ENCODE measurements at regions of chr17 and their contacts with region 1.

Region 1: DNA sequence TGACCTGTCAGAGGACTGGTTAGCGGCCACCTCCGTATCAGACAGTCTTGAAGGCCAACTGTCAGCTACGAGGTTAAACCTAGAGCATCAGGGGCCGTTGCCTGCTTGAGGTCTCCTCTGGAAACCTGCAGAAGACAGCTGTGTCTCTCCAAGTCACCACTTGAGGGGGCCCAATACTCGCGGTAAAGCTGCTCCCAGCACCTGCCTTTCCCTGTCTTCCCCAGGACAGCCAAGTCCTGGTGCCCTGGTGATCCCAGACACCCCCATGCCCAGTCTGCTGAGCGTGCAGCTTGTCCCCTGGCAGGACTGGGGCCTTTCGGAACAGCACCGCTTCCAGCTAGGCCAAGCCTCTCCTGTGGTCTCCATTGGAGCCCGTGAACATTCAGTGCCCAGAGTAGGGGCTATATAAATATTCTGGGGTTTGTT is 80.1 kb downstream of the DNAH17 start:
- DNase-seq: peak; percentile 64
- H3K4me3 ChIP-seq: no peak overlapping the region
- H3K27ac ChIP-seq: no peak overlapping the region
- H3K4me1 ChIP-seq: no peaks in the 10 kb centered on the region
- H3K27me3 ChIP-seq: no peaks in the 10 kb centered on the region
- CTCF ChIP-seq: peak; percentile 69 to 84

Region 2: GRCh38 chr17:78474614-78475146 is 22.4 kb before region 1 on chr17:
- CTCF ChIA-PET with region 1: no interaction called
- dilution Hi-C with region 1: no loop called
- in situ Hi-C with region 1: no loop called
- intact Hi-C with region 1: no loop called
- DNase-seq: no peak
- H3K4me3 ChIP-seq: no peak overlapping the region
- H3K27ac ChIP-seq: no peak overlapping the region
- H3K4me1 ChIP-seq: no peaks in the 10 kb centered on the region
- H3K27me3 ChIP-seq: no peaks in the 10 kb centered on the region
- CTCF ChIP-seq: no peak

Region 3: GRCh38 chr17:78568494-78569115 is 71.5 kb after region 1 on chr17:
- CTCF ChIA-PET with region 1: no interaction called
- dilution Hi-C with region 1: loop called (anchors 5 kb)
- in situ Hi-C with region 1: no loop called
- intact Hi-C with region 1: no loop called
- DNase-seq: peak; percentile 32
- H3K4me3 ChIP-seq: no peak overlapping the region
- H3K27ac ChIP-seq: no peak overlapping the region
- H3K4me1 ChIP-seq: no peaks in the 10 kb centered on the region
- H3K27me3 ChIP-seq: no peaks in the 10 kb centered on the region
- CTCF ChIP-seq: no peak

Region 4: DNA sequence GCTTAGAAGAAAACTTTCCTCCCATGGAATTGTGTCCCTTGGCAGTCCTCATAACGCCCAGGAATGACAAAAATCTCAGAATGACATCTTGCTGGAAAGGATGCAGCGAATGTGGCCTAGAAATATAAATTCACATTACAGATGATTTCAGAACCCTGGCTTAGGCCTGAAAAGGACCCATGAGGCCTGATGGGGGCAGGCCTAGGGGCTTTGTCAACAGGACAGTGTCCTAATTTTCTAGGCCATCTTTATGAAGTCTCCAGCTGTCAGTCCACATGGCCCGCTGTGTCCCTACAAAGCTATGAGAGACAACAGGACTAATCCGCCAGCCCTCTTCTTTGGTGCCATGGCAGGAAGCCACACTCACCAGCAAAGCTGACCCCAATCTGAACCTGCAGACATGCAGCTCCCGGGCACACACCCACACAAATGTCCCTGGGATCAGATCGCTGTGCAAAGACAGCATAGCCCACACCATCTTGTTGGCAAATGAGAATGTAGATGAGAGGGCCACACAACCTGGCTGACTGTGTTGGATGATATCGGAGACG is 120.5 kb after region 1 on chr17:
- CTCF ChIA-PET with region 1: no interaction called
- dilution Hi-C with region 1: no loop called
- in situ Hi-C with region 1: loop called in 1 of 2 experiments (anchors 10 kb)
- intact Hi-C with region 1: no loop called
- DNase-seq: no peak
- H3K4me3 ChIP-seq: no peak overlapping the region
- H3K27ac ChIP-seq: no peak overlapping the region
- H3K4me1 ChIP-seq: peaks cover 3% of the 10 kb centered on the region
- H3K27me3 ChIP-seq: no peaks in the 10 kb centered on the region
- CTCF ChIP-seq: no peak

Region 5: DNA sequence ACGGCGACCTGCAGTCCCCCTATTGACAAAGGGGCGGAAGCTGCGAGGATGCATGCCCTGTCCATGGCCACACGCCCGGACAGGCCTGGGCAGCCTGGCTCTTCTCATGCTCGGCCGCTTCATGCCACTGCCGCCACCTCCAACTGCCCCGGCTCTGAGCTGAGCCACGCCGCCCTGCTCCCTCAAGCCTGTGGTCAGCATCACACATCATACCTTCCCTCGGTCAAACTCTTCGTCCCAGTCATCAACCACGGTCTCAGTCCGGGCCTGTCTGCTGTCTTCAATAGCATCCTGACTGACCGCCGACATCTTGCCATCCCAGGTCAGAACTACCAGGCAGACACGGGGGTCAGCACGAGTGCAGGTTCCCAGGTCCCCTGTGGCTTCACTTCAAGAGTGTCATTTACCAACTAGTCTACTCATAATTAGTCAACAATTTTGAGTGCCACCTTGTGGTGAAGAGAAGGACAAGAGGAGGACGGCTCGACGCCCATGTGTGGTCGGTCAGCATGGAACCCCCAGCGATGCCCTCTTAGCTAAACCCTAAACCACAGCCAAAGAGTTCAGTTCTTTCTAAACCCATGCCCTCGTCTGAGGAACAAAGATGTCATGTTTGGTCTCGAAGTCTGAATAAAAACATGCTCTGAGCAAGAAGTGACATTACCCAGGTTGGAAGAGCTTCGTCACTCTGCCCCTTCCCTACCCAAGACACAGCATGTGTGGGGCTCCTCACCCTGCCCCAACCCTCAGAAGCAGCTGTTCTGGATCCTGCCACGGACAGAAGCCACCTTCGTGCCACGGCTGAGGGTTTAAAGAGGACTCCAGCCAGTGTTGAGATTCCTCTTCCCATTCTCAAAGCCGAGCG is 301.8 kb after region 1 on chr17:
- CTCF ChIA-PET with region 1: no interaction called
- dilution Hi-C with region 1: no loop called
- in situ Hi-C with region 1: no loop called
- intact Hi-C with region 1: loop called (anchors 1 kb)
- DNase-seq: peak; percentile 37
- H3K4me3 ChIP-seq: no peak overlapping the region
- H3K27ac ChIP-seq: no peak overlapping the region
- H3K4me1 ChIP-seq: peaks cover 41% of the 10 kb centered on the region
- H3K27me3 ChIP-seq: no peaks in the 10 kb centered on the region
- CTCF ChIP-seq: peak; percentile 12 to 48

Region 6: DNA sequence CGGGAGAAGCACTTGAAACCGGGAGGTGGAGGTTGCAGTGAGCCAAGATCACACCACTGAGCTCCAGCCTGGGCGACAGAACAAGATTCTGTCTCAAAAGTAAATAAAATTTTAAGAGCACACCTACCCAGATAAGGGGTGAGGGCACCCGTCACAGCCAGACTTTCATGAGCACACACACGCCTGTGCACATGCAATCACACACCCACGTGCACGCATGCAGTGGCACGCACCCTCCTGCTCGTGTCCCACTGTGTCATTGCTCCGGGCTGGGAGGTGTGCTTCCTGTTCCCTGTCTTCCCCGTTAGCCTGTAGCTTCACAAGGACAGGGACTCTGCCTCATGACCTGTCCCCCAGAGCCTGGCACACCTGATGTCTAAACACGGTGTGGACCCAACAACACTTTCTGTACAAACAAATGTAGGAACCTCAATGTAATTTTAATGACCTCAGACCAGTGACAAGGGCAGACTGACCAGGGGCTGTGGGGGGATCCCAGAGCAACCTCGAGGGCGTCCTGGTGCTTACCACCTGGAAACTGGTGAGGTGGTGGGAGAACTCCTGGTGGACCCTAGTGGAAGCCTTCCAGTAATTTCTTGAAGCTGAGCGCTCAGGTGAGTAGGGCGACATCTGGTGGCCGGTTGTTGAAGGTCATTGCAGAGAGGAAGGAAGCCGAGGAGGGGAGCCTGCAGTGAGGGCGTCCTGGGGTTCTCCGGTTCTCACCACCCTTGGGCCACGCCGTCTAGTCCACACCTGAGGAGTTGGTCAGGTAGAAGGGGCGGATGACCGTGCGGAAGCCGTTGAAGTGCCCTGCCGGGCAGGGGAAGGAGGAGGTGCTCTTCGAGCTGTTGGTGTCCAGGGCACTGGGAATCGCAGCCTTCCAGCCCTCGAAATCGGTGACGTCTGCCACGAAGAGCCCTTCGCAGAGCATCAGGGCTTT is 474.0 kb after region 1 on chr17:
- CTCF ChIA-PET with region 1: no interaction called
- dilution Hi-C with region 1: no loop called
- in situ Hi-C with region 1: no loop called
- intact Hi-C with region 1: loop called (anchors 5 kb)
- DNase-seq: peak; percentile 47
- H3K4me3 ChIP-seq: no peak overlapping the region
- H3K27ac ChIP-seq: no peak overlapping the region
- H3K4me1 ChIP-seq: peaks cover 32% of the 10 kb centered on the region
- H3K27me3 ChIP-seq: no peaks in the 10 kb centered on the region
- CTCF ChIP-seq: peak; percentile 84 to 88